ENCODE measurements at regions of chr21 and their contacts with region 1.

Region 1: GRCh38 chr21:41095983-41096382 is 72.0 kb upstream of the BACE2 start:
- DNase-seq: no peak
- H3K4me3 ChIP-seq: no peak overlapping the region
- H3K27ac ChIP-seq: no peak overlapping the region
- H3K4me1 ChIP-seq: no peaks in the 10 kb centered on the region
- H3K27me3 ChIP-seq: no peaks in the 10 kb centered on the region
- CTCF ChIP-seq: no peak
- POLR2A ChIP-seq: no peak

Region 2: GRCh38 chr21:40647706-40648105 is 448.3 kb before region 1 on chr21:
- intact Hi-C with region 1: no loop called
- DNase-seq: no peak
- H3K4me3 ChIP-seq: no peak overlapping the region
- H3K27ac ChIP-seq: no peak overlapping the region
- H3K4me1 ChIP-seq: no peaks in the 10 kb centered on the region
- H3K27me3 ChIP-seq: no peaks in the 10 kb centered on the region
- CTCF ChIP-seq: no peak
- POLR2A ChIP-seq: no peak

Region 3: DNA sequence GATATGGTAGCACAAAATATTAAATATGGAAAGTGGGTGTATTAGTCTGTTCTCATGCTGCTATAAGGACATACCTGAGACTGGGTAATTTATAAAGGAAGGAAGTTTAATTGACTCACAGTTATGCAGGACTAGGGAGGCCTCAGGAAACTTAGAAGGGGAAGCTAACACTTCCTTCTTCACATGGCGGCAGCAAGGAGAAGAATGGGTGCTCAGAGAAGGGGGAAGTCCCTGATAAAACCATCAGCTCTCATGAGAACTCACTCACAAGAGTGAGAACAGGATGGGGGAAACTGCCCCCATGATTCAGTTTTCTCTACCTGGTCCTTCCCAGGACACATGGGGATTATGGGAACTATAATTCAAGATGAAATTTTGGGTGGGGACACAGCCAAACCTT is 56.2 kb after region 1 on chr21:
- intact Hi-C with region 1: loop called (anchors 2 kb)
- DNase-seq: no peak
- H3K4me3 ChIP-seq: no peak overlapping the region
- H3K27ac ChIP-seq: no peak overlapping the region
- H3K4me1 ChIP-seq: peaks cover 0 to 6% of the 10 kb centered on the region in 2 donors
- H3K27me3 ChIP-seq: no peaks in the 10 kb centered on the region
- CTCF ChIP-seq: no peak
- POLR2A ChIP-seq: no peak

Region 4: DNA sequence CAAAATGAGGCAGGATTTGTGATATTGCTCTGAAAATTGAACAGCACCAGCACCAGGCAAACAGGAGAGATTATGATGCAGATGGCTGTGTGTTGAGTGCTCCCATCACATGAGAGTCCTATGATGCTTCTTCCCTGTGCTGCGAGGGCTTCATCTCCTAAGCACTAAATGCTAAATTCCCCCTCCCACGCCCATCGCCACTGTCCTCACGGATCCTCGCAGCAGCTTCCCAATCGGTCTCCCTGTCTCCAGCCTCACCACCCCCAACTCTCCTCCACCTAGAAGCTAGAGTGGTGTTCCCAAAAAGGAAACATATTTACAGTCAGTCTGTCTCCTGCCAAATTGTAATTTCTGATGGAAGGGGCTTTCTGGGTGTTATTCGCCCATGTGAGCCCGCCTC is 67.1 kb after region 1 on chr21:
- intact Hi-C with region 1: no loop called
- DNase-seq: no peak
- H3K4me3 ChIP-seq: no peak overlapping the region
- H3K27ac ChIP-seq: no peak overlapping the region
- H3K4me1 ChIP-seq: no peaks in the 10 kb centered on the region
- H3K27me3 ChIP-seq: no peaks in the 10 kb centered on the region
- CTCF ChIP-seq: no peak
- POLR2A ChIP-seq: no peak

Measured in breast epithelium (tissue), 4 donors.